MCF 10A (cell line): ENCODE measurements at regions of chr1 and their contacts with region 1.

Region 1: GRCh38 chr1:66563094-66563800 is 29.3 kb downstream of the SGIP1 start:
- DNase-seq: peak; percentile 70
- H3K4me3 Mint-ChIP-seq: no peak overlapping the region
- H3K27ac Mint-ChIP-seq: peak overlapping the region; percentile 95
- H3K4me1 Mint-ChIP-seq: peaks cover 34% of the 10 kb centered on the region
- H3K27me3 Mint-ChIP-seq: no peaks in the 10 kb centered on the region
- CTCF ChIP-seq: no peak

Region 2: GRCh38 chr1:66253330-66253921 is 309.8 kb before region 1 on chr1:
- CTCF ChIA-PET with region 1: no interaction called
- POLR2A ChIA-PET with region 1: no interaction called
- intact Hi-C with region 1: loop called (anchors 5 kb)
- DNase-seq: peak; percentile 77
- H3K4me3 Mint-ChIP-seq: no peak overlapping the region
- H3K27ac Mint-ChIP-seq: no peak overlapping the region
- H3K4me1 Mint-ChIP-seq: peaks cover 32% of the 10 kb centered on the region
- H3K27me3 Mint-ChIP-seq: no peaks in the 10 kb centered on the region
- CTCF ChIP-seq: peak; percentile 77

Region 3: DNA sequence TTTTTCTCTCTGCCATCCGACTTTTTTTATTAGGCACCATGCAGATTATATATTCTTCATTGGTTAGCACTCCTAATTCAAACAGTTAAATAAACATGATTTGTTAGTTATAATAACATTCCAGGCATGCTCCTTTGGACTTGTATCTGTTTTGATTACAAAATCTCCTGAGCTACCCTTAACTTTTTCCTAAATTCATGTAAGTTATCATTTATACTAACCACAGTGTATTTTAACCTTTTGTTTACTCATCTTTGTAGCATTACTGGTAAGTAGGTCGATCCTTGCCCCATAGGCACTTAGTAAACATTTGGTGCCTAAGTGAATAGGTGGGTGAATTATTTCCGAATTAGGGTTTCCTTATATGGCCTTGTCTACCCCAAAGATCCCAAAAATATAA is 405.3 kb after region 1 on chr1:
- CTCF ChIA-PET with region 1: no interaction called
- POLR2A ChIA-PET with region 1: no interaction called
- intact Hi-C with region 1: no loop called
- DNase-seq: no peak
- H3K4me3 Mint-ChIP-seq: no peak overlapping the region
- H3K27ac Mint-ChIP-seq: no peak overlapping the region
- H3K4me1 Mint-ChIP-seq: peaks cover 6% of the 10 kb centered on the region
- H3K27me3 Mint-ChIP-seq: no peaks in the 10 kb centered on the region
- CTCF ChIP-seq: no peak